ENCODE measurements at regions of chr10 and their contacts with region 1.

Region 1: GRCh38 chr10:118543714-118544400 is 51.6 kb downstream of the PRLHR start:
- DNase-seq: peak; percentile 81
- H3K4me3 Mint-ChIP-seq: no peak overlapping the region
- H3K27ac Mint-ChIP-seq: no peak overlapping the region
- H3K4me1 Mint-ChIP-seq: no peaks in the 10 kb centered on the region
- H3K27me3 Mint-ChIP-seq: no peaks in the 10 kb centered on the region
- CTCF ChIP-seq: peak; percentile 90

Region 2: GRCh38 chr10:118101501-118101900 is 442.4 kb before region 1 on chr10:
- CTCF ChIA-PET with region 1: no interaction called
- POLR2A ChIA-PET with region 1: no interaction called
- intact Hi-C with region 1: no loop called
- DNase-seq: no peak
- H3K4me3 Mint-ChIP-seq: no peak overlapping the region
- H3K27ac Mint-ChIP-seq: no peak overlapping the region
- H3K4me1 Mint-ChIP-seq: no peaks in the 10 kb centered on the region
- H3K27me3 Mint-ChIP-seq: no peaks in the 10 kb centered on the region
- CTCF ChIP-seq: no peak

Region 3: DNA sequence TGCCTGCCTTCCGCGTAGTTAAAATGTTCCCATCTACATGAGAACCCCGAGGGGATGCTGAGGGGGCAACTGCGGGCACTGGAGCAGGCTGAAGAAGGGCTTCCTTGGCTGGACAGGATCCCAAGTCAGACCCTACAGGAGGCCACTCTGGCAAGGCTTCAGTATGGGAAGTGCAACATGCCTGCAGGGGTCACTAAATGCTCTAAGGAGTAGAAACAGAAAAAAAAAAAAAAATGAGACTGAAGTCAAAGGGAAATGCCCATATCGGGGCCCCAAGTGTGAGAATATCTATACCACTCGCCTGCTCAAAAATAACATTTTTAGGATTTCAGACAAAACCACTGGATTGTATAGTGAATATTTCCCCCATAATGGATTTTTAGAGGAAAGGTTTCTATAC is 235.2 kb before region 1 on chr10:
- CTCF ChIA-PET with region 1: interaction called, 3 read pairs
- POLR2A ChIA-PET with region 1: no interaction called
- intact Hi-C with region 1: loop called (anchors 10 kb)
- DNase-seq: no peak
- H3K4me3 Mint-ChIP-seq: no peak overlapping the region
- H3K27ac Mint-ChIP-seq: no peak overlapping the region
- H3K4me1 Mint-ChIP-seq: no peaks in the 10 kb centered on the region
- H3K27me3 Mint-ChIP-seq: no peaks in the 10 kb centered on the region
- CTCF ChIP-seq: no peak

Region 4: GRCh38 chr10:118423800-118424479 is 119.9 kb before region 1 on chr10:
- CTCF ChIA-PET with region 1: interaction called, 9 read pairs
- POLR2A ChIA-PET with region 1: interaction called, 3 read pairs
- intact Hi-C with region 1: loop called (anchors 1 kb)
- DNase-seq: peak; percentile 90
- H3K4me3 Mint-ChIP-seq: no peak overlapping the region
- H3K27ac Mint-ChIP-seq: no peak overlapping the region
- H3K4me1 Mint-ChIP-seq: peaks cover 5% of the 10 kb centered on the region
- H3K27me3 Mint-ChIP-seq: peaks cover 4% of the 10 kb centered on the region
- CTCF ChIP-seq: peak; percentile 88

Region 5: DNA sequence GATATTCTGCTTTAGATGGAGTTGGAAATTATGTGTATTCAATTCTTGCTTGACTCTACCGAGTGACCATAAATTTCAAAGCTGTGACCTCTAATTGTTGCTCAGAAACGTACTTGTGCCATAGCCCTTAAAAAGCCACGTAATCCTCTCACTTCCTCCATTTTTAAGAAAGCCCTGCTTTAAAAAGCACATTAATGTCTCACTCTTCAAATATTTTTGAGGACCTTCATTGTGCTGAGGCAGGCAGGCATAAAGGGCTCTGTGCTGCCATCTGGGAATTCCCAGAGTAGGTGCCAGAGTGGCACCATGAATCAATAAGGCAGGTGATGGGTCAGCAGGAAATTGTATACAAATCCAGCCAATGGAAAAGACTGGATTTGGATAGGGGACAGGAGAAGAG is 104.0 kb before region 1 on chr10:
- CTCF ChIA-PET with region 1: interaction called, 11 read pairs
- POLR2A ChIA-PET with region 1: no interaction called
- intact Hi-C with region 1: no loop called
- DNase-seq: no peak
- H3K4me3 Mint-ChIP-seq: no peak overlapping the region
- H3K27ac Mint-ChIP-seq: no peak overlapping the region
- H3K4me1 Mint-ChIP-seq: no peaks in the 10 kb centered on the region
- H3K27me3 Mint-ChIP-seq: no peaks in the 10 kb centered on the region
- CTCF ChIP-seq: no peak

Region 6: DNA sequence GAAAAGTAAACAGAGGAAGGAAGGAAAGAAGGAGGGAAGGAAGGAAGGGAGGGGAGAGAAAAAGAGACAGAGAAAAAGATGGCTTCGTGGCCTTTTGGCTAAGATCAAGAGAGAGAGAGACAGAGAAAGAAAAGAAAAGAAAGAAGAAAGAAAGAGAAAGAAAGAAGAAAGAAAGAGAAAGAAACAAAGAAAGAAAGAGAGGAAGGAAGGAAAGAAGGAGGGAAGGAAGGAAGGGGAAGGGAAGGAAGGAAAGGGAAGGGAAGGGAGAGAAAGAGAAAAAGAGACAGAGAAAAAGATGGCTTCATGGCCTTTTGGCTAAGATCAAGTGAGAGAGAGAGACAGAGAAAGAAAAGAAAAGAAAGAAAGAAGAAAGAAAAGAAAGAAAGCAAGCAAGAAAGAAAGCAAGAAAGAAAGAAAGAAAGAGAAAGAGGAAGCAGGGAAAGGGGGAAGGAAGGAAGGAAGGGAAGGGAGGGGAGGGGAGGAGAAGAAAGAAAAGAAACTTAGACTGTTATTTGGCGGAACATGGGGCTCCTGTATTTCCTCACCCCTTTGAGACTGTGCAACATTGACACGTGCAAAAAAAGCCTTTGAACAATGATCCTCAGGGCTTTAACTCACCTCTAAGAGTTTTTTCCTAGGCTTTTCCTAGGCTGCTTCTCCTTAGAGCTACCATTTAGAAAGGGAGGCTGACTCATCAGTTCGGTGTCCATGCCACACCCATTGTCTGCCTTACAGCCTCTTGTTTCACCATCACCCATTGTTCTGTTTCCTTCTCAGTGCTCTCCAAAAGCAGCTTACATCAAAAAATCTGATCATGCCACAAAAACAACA is 39.6 kb before region 1 on chr10:
- CTCF ChIA-PET with region 1: interaction called, 16 read pairs
- POLR2A ChIA-PET with region 1: interaction called, 21 read pairs
- intact Hi-C with region 1: loop called (anchors 5 kb)
- DNase-seq: peak; percentile 97
- H3K4me3 Mint-ChIP-seq: peak overlapping the region; percentile 55
- H3K27ac Mint-ChIP-seq: peak overlapping the region; percentile 96
- H3K4me1 Mint-ChIP-seq: peaks cover 50% of the 10 kb centered on the region
- H3K27me3 Mint-ChIP-seq: no peaks in the 10 kb centered on the region
- CTCF ChIP-seq: no peak

Measured in MCF 10A (cell line).